Calu3 (cell line): ENCODE measurements at regions of chr6 and their contacts with region 1.

Region 1: GRCh38 chr6:37169496-37170272 is at the start of gene PIM1:
- DNase-seq: peak; percentile 99
- H3K4me3 Mint-ChIP-seq: peak within 1 kb of the TSS; percentile 96
- H3K27ac Mint-ChIP-seq: peak within 1 kb of the TSS; percentile 93
- H3K4me1 Mint-ChIP-seq: peaks cover 17% of the 10 kb centered on the region
- H3K27me3 Mint-ChIP-seq: no peaks in the 10 kb centered on the region
- CTCF ChIP-seq: no peak
- total RNA-seq, gene PIM1: 18.6 and 19.1 TPM in 2 replicates

Region 2: DNA sequence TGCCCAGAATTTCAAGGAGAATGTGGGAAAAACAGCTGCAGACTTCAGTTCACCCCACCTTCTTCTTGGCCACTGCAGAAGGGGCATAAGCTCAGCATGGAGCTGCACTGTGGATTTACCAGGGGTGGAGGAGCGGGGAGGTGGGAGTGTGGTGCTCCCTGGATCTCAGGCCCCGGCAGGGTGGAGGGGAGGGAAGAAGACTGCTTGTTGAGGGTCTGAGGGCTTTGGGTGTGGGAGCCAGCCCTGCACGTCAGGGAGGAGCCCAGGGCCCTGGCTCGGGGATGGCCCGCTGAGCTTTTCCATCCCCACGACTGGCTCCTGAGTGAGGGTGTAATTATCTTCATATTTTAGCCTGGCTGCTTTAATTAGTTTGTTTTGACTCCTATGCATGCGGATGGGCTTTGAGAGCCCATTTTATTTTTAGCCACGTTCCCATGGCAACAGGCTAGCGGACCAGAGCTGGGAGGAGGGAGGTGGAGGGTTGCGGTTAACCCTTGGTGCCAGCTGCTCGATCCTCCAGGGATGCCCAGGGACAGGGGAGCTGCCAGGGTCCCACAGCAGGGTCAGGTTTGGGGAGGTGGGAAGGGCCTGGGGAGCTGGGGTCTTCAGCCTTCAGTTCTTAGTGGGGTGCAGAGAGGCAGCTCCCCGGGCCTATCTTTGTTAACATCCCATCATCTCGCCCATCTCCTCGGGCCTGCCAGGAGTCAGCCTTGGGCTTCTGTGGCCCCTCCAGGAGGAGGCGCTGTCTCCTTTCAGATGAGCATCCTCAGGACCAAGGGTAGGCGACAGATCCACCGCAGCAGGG is 403.9 kb before region 1 on chr6:
- CTCF ChIA-PET with region 1: interaction called, 5 read pairs
- intact Hi-C with region 1: loop called (anchors 1 kb)
- DNase-seq: peak; percentile 92
- H3K4me3 Mint-ChIP-seq: no peak overlapping the region
- H3K27ac Mint-ChIP-seq: no peak overlapping the region
- H3K4me1 Mint-ChIP-seq: peaks cover 24% of the 10 kb centered on the region
- H3K27me3 Mint-ChIP-seq: no peaks in the 10 kb centered on the region
- CTCF ChIP-seq: peak; percentile 95

Region 3: GRCh38 chr6:37029249-37029971 is 140.3 kb before region 1 on chr6:
- CTCF ChIA-PET with region 1: interaction called, 27 read pairs
- intact Hi-C with region 1: no loop called
- DNase-seq: peak; percentile 89
- H3K4me3 Mint-ChIP-seq: no peak overlapping the region
- H3K27ac Mint-ChIP-seq: peak overlapping the region; percentile 11
- H3K4me1 Mint-ChIP-seq: peaks cover 29% of the 10 kb centered on the region
- H3K27me3 Mint-ChIP-seq: no peaks in the 10 kb centered on the region
- CTCF ChIP-seq: peak; percentile 72

Region 4: DNA sequence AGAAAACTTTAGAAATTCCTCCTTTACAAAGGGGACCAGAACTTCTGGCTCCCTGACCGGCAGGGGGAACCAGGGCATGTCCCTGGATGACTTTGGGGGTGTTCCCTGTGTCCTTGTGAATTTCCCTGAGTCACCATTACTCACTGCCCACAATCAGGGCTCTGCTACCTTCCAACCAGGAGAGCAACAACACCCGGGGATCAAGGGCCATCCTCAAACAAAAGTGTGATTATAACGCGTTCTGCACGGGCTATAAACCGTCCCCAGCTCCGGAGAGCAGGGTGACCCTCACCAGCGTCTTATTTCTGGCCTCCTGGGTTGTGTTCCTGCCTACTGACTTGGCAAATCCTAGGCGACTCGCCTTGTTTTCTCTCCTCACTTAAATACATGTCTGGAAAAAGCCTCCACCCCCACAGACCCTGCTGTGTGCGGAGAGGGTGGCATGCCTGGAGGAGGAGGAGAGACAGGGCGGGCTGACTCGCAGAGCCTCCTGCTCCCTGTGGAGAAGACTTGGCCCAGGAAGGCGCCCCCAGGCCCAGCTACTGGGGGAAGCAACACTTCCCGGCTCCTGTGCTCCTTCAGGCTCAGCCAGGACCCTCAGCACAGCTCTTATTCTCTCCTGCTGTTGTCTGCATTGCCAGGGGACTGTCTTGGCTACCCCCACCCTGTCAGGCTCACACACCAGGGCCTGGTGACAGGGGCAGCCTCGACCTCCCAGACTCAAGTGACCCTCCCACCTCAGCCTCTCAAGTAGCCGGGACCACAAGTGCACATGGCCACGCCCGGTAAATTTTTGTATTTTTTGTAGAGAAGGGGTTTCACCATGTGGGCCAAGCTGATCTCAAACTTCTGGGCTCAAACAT is 110.1 kb before region 1 on chr6:
- CTCF ChIA-PET with region 1: interaction called, 58 read pairs
- intact Hi-C with region 1: loop called (anchors 2 kb)
- DNase-seq: peak; percentile 90
- H3K4me3 Mint-ChIP-seq: peak overlapping the region; percentile 53
- H3K27ac Mint-ChIP-seq: peak overlapping the region; percentile 79
- H3K4me1 Mint-ChIP-seq: peaks cover 64% of the 10 kb centered on the region
- H3K27me3 Mint-ChIP-seq: no peaks in the 10 kb centered on the region
- CTCF ChIP-seq: peak; percentile 77

Region 5: DNA sequence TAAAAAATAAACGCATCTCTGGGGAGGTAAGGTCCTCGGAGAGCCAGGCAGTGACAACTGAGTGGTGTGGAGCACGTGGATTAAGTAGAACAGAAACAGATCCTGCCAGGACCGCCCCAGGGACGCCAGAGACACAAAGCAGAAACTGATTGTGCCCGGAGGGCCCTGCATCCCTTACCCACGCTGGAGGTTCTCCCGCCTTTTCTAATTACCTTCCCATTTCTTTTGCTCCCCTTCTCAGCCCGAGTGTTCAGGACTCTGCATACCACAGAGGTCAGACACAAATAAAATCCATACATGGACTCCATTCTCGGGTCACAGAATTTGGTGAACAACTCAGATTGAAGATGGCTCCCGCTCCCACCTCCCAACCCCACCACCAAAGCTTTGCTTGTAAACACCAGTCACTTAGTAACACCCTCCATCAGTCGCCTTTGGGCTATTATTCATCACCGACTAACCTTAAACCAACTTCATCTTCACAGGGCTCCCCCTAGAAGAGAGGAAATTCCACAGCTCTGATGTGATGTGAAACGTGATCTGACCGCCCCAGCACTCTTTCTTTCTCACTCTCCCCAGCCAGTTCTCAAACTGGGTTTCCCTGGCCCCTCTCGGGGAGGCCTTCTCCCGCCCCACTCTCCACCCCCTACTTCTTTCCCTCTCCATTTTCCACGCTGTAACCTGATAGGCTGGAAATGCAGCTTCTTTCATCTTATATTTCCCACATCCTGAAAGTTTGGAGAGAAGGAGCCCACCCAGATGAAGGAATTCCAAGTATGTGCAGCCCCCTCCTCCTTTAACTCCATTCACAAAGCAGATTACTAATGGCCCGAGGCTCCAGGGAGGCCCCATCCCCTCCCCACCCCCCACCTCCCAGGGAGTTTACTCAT is 32.2 kb before region 1 on chr6:
- CTCF ChIA-PET with region 1: interaction called, 7 read pairs
- intact Hi-C with region 1: loop called (anchors 5 kb)
- DNase-seq: peak; percentile 80
- H3K4me3 Mint-ChIP-seq: peak overlapping the region; percentile 62
- H3K27ac Mint-ChIP-seq: peak overlapping the region; percentile 98
- H3K4me1 Mint-ChIP-seq: peaks cover 62% of the 10 kb centered on the region
- H3K27me3 Mint-ChIP-seq: no peaks in the 10 kb centered on the region
- CTCF ChIP-seq: no peak